ENCODE measurements at regions of chr6 and their contacts with region 1.

Region 1: GRCh38 chr6:155861821-155862220 is 406.2 kb upstream of the NOX3 start:
- DNase-seq: no peak
- ATAC-seq: no peak
- H3K4me3 ChIP-seq: no peak overlapping the region
- H3K27ac ChIP-seq: no peak overlapping the region
- H3K4me1 ChIP-seq: no peaks in the 10 kb centered on the region
- H3K27me3 ChIP-seq: no peaks in the 10 kb centered on the region; a peak in 1 of 5 replicates
- CTCF ChIP-seq: no peak
- EP300 ChIP-seq: no peak
- POLR2A ChIP-seq: no peak
- RAD21 ChIP-seq: no peak

Region 2: GRCh38 chr6:155939253-155939652 is 77.4 kb after region 1 on chr6:
- CTCF ChIA-PET with region 1: no interaction called
- POLR2A ChIA-PET with region 1: no interaction called
- in situ Hi-C with region 1: no loop called
- intact Hi-C with region 1: no loop called
- DNase-seq: no peak
- ATAC-seq: no peak
- H3K4me3 ChIP-seq: no peak overlapping the region
- H3K27ac ChIP-seq: no peak overlapping the region
- H3K4me1 ChIP-seq: no peaks in the 10 kb centered on the region
- H3K27me3 ChIP-seq: no peaks in the 10 kb centered on the region; a peak in 1 of 5 replicates
- CTCF ChIP-seq: no peak
- EP300 ChIP-seq: no peak
- POLR2A ChIP-seq: no peak
- RAD21 ChIP-seq: no peak

Region 3: DNA sequence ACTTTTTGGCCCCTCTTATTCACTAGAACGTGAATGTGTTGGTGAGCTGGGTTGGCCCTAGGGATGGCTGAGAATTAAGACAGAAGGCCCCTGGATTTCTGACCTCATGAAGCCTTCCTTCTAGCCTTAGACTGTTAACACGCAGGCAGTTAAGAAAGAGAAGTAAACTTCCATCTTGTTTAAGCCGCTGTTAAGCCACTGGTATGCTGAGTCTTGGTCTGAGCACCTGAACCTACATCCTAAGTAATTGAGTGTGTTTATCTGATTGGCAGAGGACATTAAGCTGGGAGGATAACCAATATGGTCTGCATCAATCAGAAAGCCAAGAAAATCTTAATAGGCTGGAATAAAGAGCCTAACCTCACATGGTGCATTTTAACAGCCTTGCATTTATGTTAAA is 380.4 kb after region 1 on chr6:
- CTCF ChIA-PET with region 1: no interaction called
- POLR2A ChIA-PET with region 1: no interaction called
- in situ Hi-C with region 1: no loop called
- intact Hi-C with region 1: loop called (anchors 5 kb)
- DNase-seq: no peak
- ATAC-seq: no peak
- H3K4me3 ChIP-seq: no peak overlapping the region
- H3K27ac ChIP-seq: no peak overlapping the region
- H3K4me1 ChIP-seq: no peaks in the 10 kb centered on the region
- H3K27me3 ChIP-seq: no peaks in the 10 kb centered on the region
- CTCF ChIP-seq: no peak
- EP300 ChIP-seq: no peak
- POLR2A ChIP-seq: no peak
- RAD21 ChIP-seq: no peak